Heart right ventricle (tissue), 16 donors: ENCODE measurements at regions of chr3 and their contacts with region 1.

Region 1: DNA sequence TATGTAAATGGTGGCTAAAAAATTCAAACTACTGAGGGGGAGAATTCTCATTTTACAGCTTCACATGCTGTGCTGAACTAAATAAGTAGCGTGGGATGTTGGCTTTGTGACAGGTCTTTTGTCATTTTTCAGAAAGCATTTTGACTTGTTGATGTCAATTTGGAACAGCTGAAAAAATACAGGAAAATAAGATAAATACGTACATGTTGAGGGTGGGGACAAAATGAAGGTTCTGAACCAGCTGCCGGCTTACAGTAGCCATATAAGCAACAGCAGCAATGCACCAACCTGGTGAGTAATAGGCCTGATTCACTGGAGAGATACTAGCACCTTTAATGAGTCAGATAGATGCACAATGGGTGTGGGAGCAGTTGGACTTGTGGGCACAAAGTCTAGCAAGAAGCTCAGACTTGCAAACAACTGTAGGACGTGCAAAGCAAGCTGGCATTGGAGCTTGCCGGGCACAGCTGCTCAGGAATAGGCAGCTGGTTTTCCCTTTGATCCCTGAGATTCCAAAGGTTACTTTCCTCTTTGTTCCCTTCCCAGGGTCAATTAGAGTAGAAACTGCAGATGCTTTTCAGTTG is 12.9 kb downstream of the B3GNT5 start:
- DNase-seq: no peak
- ATAC-seq: peak in 2 of 8 donors; percentile 43 to 47
- H3K4me3 ChIP-seq: peak overlapping the region in 2 of 10 donors; percentile 31 to 35
- H3K27ac ChIP-seq: peak overlapping the region in 6 of 10 donors; percentile 41 to 75 (median 60)
- H3K4me1 ChIP-seq: peaks cover 0 to 50% (median 20%) of the 10 kb centered on the region in 9 donors
- H3K27me3 ChIP-seq: no peaks in the 10 kb centered on the region
- CTCF ChIP-seq: no peak

Region 2: GRCh38 chr3:182980204-182981037 is 285.5 kb before region 1 on chr3 and contains the start of gene DCUN1D1:
- intact Hi-C with region 1: no loop called
- DNase-seq: peak; percentile 91 to 94
- ATAC-seq: peak; percentile 95 to 98 (median 97)
- H3K4me3 ChIP-seq: peak within 1 kb of the TSS; percentile 76 to 98 (median 95)
- H3K27ac ChIP-seq: peak within 1 kb of the TSS; percentile 74 to 95 (median 90)
- H3K4me1 ChIP-seq: peaks cover 0 to 26% (median 22%) of the 10 kb centered on the region in 9 donors
- H3K27me3 ChIP-seq: no peaks in the 10 kb centered on the region
- CTCF ChIP-seq: no peak
- total RNA-seq, gene DCUN1D1: 30.7 to 45.2 (median 36.5) TPM

Region 3: DNA sequence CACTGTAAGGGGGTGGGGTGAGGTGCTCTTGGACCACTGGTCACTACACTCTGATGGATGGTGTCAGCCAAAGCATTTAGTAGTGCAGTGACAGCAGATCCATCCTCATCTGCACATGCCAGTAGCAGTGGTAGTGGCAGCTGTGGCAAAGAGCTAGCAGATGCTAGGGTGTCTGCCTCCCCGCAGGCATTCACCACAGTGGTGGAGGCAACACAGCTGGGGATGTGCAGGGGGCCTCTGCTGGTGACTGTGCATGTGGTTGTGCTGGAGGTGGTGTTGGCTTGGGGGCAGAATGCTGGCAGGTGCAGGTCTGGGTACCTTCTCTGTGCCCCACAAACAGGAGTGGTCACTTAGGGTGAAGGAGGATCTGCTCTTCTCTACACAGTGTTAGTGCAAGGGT is 266.2 kb before region 1 on chr3:
- intact Hi-C with region 1: no loop called
- DNase-seq: no peak
- ATAC-seq: peak in 1 of 8 donors; percentile 44
- H3K4me3 ChIP-seq: no peak overlapping the region
- H3K27ac ChIP-seq: no peak overlapping the region
- H3K4me1 ChIP-seq: no peaks in the 10 kb centered on the region
- H3K27me3 ChIP-seq: no peaks in the 10 kb centered on the region
- CTCF ChIP-seq: no peak

Region 4: GRCh38 chr3:183275937-183276336 is 10.0 kb after region 1 on chr3:
- intact Hi-C with region 1: loop called in 1 of 10 experiments (anchors 1 kb)
- DNase-seq: no peak
- ATAC-seq: no peak
- H3K4me3 ChIP-seq: no peak overlapping the region
- H3K27ac ChIP-seq: no peak overlapping the region
- H3K4me1 ChIP-seq: peaks cover 0 to 36% (median 5%) of the 10 kb centered on the region in 9 donors
- H3K27me3 ChIP-seq: no peaks in the 10 kb centered on the region
- CTCF ChIP-seq: no peak